ENCODE measurements at regions of chr5 and their contacts with region 1.

Region 1: GRCh38 chr5:102681407-102681983 is 73.6 kb upstream of the PAM start:
- DNase-seq: peak; percentile 77
- ATAC-seq: peak; percentile 79
- H3K4me3 Mint-ChIP-seq: no peak overlapping the region
- H3K27ac Mint-ChIP-seq: no peak overlapping the region
- H3K4me1 Mint-ChIP-seq: no peaks in the 10 kb centered on the region
- H3K27me3 Mint-ChIP-seq: peaks cover 3% of the 10 kb centered on the region
- CTCF ChIP-seq: peak; percentile 71

Region 2: GRCh38 chr5:102700916-102701315 is 19.4 kb after region 1 on chr5:
- CTCF ChIA-PET with region 1: interaction called, 12 read pairs
- POLR2A ChIA-PET with region 1: no interaction called
- intact Hi-C with region 1: no loop called
- DNase-seq: no peak
- ATAC-seq: no peak
- H3K4me3 Mint-ChIP-seq: no peak overlapping the region
- H3K27ac Mint-ChIP-seq: no peak overlapping the region
- H3K4me1 Mint-ChIP-seq: no peaks in the 10 kb centered on the region
- H3K27me3 Mint-ChIP-seq: peaks cover 5% of the 10 kb centered on the region
- CTCF ChIP-seq: no peak

Region 3: GRCh38 chr5:102778478-102778877 is 97.0 kb after region 1 on chr5:
- CTCF ChIA-PET with region 1: interaction called, 12 read pairs
- POLR2A ChIA-PET with region 1: no interaction called
- intact Hi-C with region 1: no loop called
- DNase-seq: peak; percentile 21
- ATAC-seq: peak; percentile 84
- H3K4me3 Mint-ChIP-seq: peak overlapping the region; percentile 12
- H3K27ac Mint-ChIP-seq: peak overlapping the region; percentile 76
- H3K4me1 Mint-ChIP-seq: peaks cover 74% of the 10 kb centered on the region
- H3K27me3 Mint-ChIP-seq: no peaks in the 10 kb centered on the region
- CTCF ChIP-seq: no peak

Region 4: DNA sequence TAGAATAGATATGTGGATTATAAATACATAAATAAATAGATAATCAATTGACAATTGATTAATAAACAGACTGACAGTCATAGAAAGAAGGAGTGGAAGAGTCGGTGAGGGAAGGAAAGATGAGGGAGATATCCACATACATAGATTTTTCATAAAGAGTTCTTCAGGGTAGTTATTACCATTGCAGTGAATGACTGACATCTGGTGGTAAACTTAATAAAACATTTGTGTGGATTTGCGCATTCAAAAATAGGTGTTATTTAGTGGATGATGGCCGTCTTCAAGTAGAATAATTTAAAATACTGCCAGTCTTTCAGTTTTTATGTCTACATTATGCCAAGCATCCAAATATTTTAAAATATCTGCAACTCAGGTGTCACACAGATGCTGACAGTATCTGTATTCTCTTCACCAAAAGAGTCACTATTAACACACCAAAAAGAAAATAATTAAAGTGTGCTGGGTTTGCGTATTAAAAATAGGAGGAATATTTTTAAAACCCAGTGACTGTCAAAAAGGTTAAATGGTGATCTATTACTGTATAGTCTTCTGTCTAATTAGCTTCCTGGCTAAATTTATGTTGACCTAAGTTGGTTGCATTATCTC is 359.7 kb after region 1 on chr5:
- CTCF ChIA-PET with region 1: interaction called, 8 read pairs
- POLR2A ChIA-PET with region 1: no interaction called
- intact Hi-C with region 1: loop called (anchors 2 kb)
- DNase-seq: no peak
- ATAC-seq: no peak
- H3K4me3 Mint-ChIP-seq: no peak overlapping the region
- H3K27ac Mint-ChIP-seq: no peak overlapping the region
- H3K4me1 Mint-ChIP-seq: no peaks in the 10 kb centered on the region
- H3K27me3 Mint-ChIP-seq: peaks cover under 1% of the 10 kb centered on the region
- CTCF ChIP-seq: peak; percentile 52

Region 5: GRCh38 chr5:103203226-103203625 is 521.7 kb after region 1 on chr5:
- CTCF ChIA-PET with region 1: no interaction called
- POLR2A ChIA-PET with region 1: no interaction called
- intact Hi-C with region 1: no loop called
- DNase-seq: no peak
- ATAC-seq: no peak
- H3K4me3 Mint-ChIP-seq: no peak overlapping the region
- H3K27ac Mint-ChIP-seq: no peak overlapping the region
- H3K4me1 Mint-ChIP-seq: peaks cover 13% of the 10 kb centered on the region
- H3K27me3 Mint-ChIP-seq: no peaks in the 10 kb centered on the region
- CTCF ChIP-seq: no peak

Region 6: GRCh38 chr5:103224118-103224893 is 542.8 kb after region 1 on chr5:
- CTCF ChIA-PET with region 1: interaction called, 12 read pairs
- POLR2A ChIA-PET with region 1: no interaction called
- intact Hi-C with region 1: no loop called
- DNase-seq: peak; percentile 57
- ATAC-seq: peak; percentile 100
- H3K4me3 Mint-ChIP-seq: no peak overlapping the region
- H3K27ac Mint-ChIP-seq: no peak overlapping the region
- H3K4me1 Mint-ChIP-seq: no peaks in the 10 kb centered on the region
- H3K27me3 Mint-ChIP-seq: peaks cover 11% of the 10 kb centered on the region
- CTCF ChIP-seq: peak; percentile 74

Measured in activated CD8-positive, alpha-beta T cell treated with anti-CD3 and anti-CD28 coated beads for 36 hours (primary cell).